Right cardiac atrium (tissue), 5 donors: ENCODE measurements at regions of chr3 and their contacts with region 1.

Region 1: DNA sequence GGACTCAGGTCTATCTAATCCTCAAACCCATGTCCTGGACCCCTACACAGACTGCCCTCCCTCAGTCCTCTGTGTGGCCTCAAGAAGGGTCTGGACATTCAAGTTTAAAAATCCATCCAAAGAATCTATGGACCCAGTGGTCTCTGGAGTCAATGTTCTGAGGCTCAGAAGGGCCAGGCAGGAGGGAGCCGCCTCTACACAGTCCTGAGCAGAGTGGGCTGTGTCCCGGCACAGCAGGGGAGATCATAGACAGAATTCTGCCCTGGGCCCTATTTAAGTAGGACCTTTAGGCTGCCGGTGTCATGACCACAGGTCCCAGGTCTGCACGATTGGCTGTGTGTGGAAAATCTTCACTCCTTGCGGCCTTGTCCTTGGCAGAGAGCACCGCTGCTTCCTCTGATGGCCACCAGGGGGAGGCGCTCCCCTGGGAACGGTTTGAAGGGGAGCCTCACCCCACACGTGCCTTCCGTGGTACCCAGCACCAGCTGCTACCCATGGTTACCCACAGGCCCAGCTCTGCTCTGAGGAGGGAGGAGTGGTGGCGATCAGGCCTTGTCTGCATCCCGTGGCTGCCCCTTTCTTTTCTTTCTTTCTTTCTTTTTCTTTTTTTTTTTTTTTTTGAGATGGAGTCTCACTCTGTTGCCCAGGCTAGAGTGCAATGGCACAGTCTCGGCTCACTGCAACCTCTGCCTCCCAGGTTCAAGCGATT is 37.9 kb downstream of the CHRD start:
- DNase-seq: peak; percentile 62 to 85 (median 84)
- ATAC-seq: peak; percentile 85 to 92
- H3K4me3 ChIP-seq: no peak overlapping the region
- H3K27ac ChIP-seq: no peak overlapping the region
- H3K4me1 ChIP-seq: no peaks in the 10 kb centered on the region
- H3K27me3 ChIP-seq: no peaks in the 10 kb centered on the region

Region 2: DNA sequence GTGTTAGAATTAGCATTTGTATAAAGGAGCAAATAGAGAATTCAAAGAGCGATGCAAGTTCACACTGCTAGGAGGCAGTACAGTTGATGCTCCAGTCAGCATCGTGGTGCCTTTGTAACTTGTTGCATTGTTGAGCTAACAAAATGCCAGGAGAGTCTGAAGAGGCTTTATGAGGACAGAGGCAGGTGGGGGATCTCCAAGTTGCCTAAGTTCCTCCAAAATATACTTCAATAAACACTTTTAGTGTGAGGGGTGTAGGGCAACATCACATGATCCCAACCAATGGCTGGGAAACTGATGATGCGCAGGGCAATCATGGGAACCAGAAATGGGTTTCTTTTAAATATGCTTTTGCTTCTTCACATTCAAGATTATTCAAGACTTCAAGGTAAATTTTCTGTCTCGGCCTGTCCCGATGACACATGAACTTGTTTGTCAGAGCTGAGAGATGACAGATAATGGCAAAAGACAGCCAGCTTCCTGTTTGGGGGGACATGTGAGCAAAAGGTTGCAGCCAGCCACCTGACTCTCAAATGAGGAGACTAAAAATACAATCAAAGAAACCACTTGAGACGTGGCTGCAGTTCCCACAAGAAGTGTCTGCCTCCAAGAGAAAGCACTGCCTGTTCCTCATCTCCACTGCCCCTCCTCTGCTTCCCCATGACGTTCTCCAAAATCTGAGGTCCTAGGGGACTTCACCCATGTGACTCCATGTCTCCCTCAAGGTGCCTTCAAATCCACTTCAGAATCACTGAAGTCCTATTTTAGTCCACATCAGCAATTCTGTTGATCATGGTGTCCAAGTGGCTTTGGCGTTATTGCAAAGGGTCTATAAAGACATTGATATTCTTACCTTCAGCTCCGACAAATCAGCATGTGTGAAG is 901.6 kb before region 1 on chr3:
- intact Hi-C with region 1: no loop called
- DNase-seq: no peak
- ATAC-seq: peak; percentile 26 to 43
- H3K4me3 ChIP-seq: no peak overlapping the region
- H3K27ac ChIP-seq: no peak overlapping the region
- H3K4me1 ChIP-seq: peaks cover 2% of the 10 kb centered on the region
- H3K27me3 ChIP-seq: no peaks in the 10 kb centered on the region

Region 3: GRCh38 chr3:184459355-184459754 is 41.6 kb after region 1 on chr3:
- intact Hi-C with region 1: no loop called
- DNase-seq: no peak
- ATAC-seq: peak in 1 of 2 donors; percentile 91
- H3K4me3 ChIP-seq: no peak overlapping the region
- H3K27ac ChIP-seq: no peak overlapping the region
- H3K4me1 ChIP-seq: no peaks in the 10 kb centered on the region
- H3K27me3 ChIP-seq: no peaks in the 10 kb centered on the region

Region 4: GRCh38 chr3:184472723-184473428 is 55.1 kb after region 1 on chr3:
- intact Hi-C with region 1: loop called in 1 of 4 experiments (anchors 10 kb)
- DNase-seq: no peak
- ATAC-seq: peak; percentile 61 to 71
- H3K4me3 ChIP-seq: no peak overlapping the region
- H3K27ac ChIP-seq: peak overlapping the region; percentile 10
- H3K4me1 ChIP-seq: no peaks in the 10 kb centered on the region
- H3K27me3 ChIP-seq: no peaks in the 10 kb centered on the region

Region 5: GRCh38 chr3:184513276-184514170 is 95.8 kb after region 1 on chr3:
- intact Hi-C with region 1: loop called in 1 of 4 experiments (anchors 5 kb)
- DNase-seq: peak; percentile 85 to 93 (median 93)
- ATAC-seq: peak; percentile 97 to 99
- H3K4me3 ChIP-seq: peak overlapping the region; percentile 52
- H3K27ac ChIP-seq: no peak overlapping the region
- H3K4me1 ChIP-seq: no peaks in the 10 kb centered on the region
- H3K27me3 ChIP-seq: peaks cover under 1% of the 10 kb centered on the region

Region 6: GRCh38 chr3:184531626-184532280 is 114.0 kb after region 1 on chr3:
- intact Hi-C with region 1: loop called in 1 of 4 experiments (anchors 10 kb)
- DNase-seq: no peak
- ATAC-seq: peak in 1 of 2 donors; percentile 61
- H3K4me3 ChIP-seq: no peak overlapping the region
- H3K27ac ChIP-seq: no peak overlapping the region
- H3K4me1 ChIP-seq: no peaks in the 10 kb centered on the region
- H3K27me3 ChIP-seq: no peaks in the 10 kb centered on the region

Region 7: GRCh38 chr3:184543843-184544512 is 126.2 kb after region 1 on chr3:
- intact Hi-C with region 1: loop called in 2 of 4 experiments (anchors 10 kb)
- DNase-seq: peak; percentile 60 to 74 (median 72)
- ATAC-seq: peak; percentile 53 to 73
- H3K4me3 ChIP-seq: no peak overlapping the region
- H3K27ac ChIP-seq: no peak overlapping the region
- H3K4me1 ChIP-seq: no peaks in the 10 kb centered on the region
- H3K27me3 ChIP-seq: no peaks in the 10 kb centered on the region

Region 8: GRCh38 chr3:184583578-184584425 is 166.0 kb after region 1 on chr3:
- intact Hi-C with region 1: no loop called
- DNase-seq: peak; percentile 41 to 85 (median 80)
- ATAC-seq: peak; percentile 71 to 72
- H3K4me3 ChIP-seq: peak overlapping the region; percentile 41
- H3K27ac ChIP-seq: no peak overlapping the region
- H3K4me1 ChIP-seq: no peaks in the 10 kb centered on the region
- H3K27me3 ChIP-seq: no peaks in the 10 kb centered on the region